Mammary epithelial cell (primary cell): ENCODE measurements at regions of chr5 and their contacts with region 1.

Region 1: GRCh38 chr5:138772986-138773594 is 19.9 kb downstream of the CTNNA1 start:
- DNase-seq: no peak
- H3K4me3 ChIP-seq: no peak overlapping the region
- H3K27ac ChIP-seq: no peak overlapping the region
- H3K4me1 ChIP-seq: no peaks in the 10 kb centered on the region
- H3K27me3 ChIP-seq: no peaks in the 10 kb centered on the region
- CTCF ChIP-seq: no peak

Region 2: DNA sequence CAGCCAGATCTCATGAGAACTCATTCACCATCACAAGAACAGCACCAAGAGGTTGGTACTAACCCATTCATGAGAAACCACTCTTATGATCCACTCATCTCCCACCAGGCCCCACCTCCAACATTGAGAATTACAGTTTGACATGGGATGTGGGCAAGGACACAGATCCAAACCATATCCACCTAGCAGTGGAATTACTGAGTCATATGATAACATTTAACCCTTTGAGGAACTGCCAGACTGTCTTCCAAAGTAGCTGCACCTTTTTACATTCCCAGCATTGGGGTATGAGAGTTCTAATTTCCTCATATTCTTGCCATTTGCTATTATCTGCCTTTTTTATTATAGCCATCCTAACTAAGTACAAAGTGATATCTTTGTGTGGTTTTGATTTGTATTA is 32.0 kb after region 1 on chr5:
- CTCF ChIA-PET with region 1: interaction called, 10 read pairs
- dilution Hi-C with region 1: no loop called
- in situ Hi-C with region 1: no loop called
- intact Hi-C with region 1: no loop called
- DNase-seq: no peak
- H3K4me3 ChIP-seq: no peak overlapping the region
- H3K27ac ChIP-seq: no peak overlapping the region
- H3K4me1 ChIP-seq: no peaks in the 10 kb centered on the region
- H3K27me3 ChIP-seq: no peaks in the 10 kb centered on the region
- CTCF ChIP-seq: no peak